ENCODE measurements at regions of chr17 and their contacts with region 1.

Region 1: DNA sequence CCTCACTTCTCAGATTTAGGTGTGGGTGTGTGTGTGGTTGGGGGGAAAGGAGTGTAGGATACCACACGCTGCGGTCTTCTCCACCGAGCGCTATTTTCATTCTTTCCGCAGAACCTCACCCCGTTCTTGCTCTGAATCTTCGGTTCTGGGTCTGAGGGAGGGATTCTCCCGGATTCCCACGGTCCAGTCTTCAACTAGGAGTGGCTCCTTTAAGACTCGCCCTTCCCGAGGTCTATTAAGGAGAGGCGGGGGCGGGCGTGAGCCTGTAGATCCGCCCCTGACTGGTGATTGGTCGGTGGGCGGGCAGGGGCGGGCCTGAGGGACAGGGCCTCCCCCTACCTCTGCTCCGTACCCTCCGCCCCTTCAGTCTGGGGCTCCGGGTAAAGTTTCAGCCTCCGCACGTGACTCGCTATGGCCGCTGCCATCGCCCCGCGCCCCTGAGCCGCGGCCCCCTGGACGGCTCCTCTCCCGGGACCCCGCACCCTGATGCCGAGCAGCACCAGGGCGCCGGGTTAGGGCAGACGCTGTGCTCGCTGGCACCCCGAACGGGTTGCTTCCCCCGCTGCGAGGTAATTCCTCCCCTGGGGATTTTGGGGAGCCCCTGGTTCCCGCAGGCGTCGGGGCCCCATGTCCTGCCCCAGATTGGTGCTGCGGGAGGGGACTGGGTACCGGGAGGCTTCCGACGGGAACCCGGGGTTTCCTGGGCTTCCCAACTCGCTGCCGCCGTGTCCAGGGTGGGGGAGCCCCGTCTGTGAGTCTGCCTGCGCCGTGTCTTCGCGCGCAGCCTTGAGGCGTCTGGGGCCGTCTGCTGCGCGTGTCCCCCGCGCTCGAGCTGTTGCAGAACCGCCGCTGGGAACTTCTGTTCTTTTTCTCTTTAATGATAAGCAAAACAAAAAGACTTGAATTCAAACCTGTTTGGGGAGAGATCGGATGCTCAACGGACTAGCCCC is 9.2 kb downstream of the RARA start:
- DNase-seq: peak; percentile 100
- H3K4me3 Mint-ChIP-seq: peak overlapping the region; percentile 89
- H3K27ac Mint-ChIP-seq: peak overlapping the region; percentile 71
- H3K4me1 Mint-ChIP-seq: peaks cover 45% of the 10 kb centered on the region
- H3K27me3 Mint-ChIP-seq: no peaks in the 10 kb centered on the region
- CTCF ChIP-seq: no peak

Region 2: GRCh38 chr17:40303009-40303657 is 15.0 kb before region 1 on chr17:
- CTCF ChIA-PET with region 1: interaction called, 159 read pairs
- intact Hi-C with region 1: loop called (anchors 2 kb)
- DNase-seq: peak; percentile 94
- H3K4me3 Mint-ChIP-seq: no peak overlapping the region
- H3K27ac Mint-ChIP-seq: peak overlapping the region; percentile 26
- H3K4me1 Mint-ChIP-seq: peaks cover 34% of the 10 kb centered on the region
- H3K27me3 Mint-ChIP-seq: no peaks in the 10 kb centered on the region
- CTCF ChIP-seq: peak; percentile 99

Region 3: GRCh38 chr17:40340880-40341807 is 23.0 kb after region 1 on chr17:
- CTCF ChIA-PET with region 1: interaction called, 1,520 read pairs
- intact Hi-C with region 1: loop called (anchors 1 kb)
- DNase-seq: peak; percentile 100
- H3K4me3 Mint-ChIP-seq: peak overlapping the region; percentile 89
- H3K27ac Mint-ChIP-seq: peak overlapping the region; percentile 75
- H3K4me1 Mint-ChIP-seq: peaks cover 57% of the 10 kb centered on the region
- H3K27me3 Mint-ChIP-seq: no peaks in the 10 kb centered on the region
- CTCF ChIP-seq: peak; percentile 92

Region 4: GRCh38 chr17:41678907-41679739 is 1361.0 kb after region 1 on chr17:
- CTCF ChIA-PET with region 1: interaction called, 10 read pairs
- intact Hi-C with region 1: no loop called
- DNase-seq: peak; percentile 80
- H3K4me3 Mint-ChIP-seq: peak overlapping the region; percentile 69
- H3K27ac Mint-ChIP-seq: peak overlapping the region; percentile 96
- H3K4me1 Mint-ChIP-seq: peaks cover 62% of the 10 kb centered on the region
- H3K27me3 Mint-ChIP-seq: no peaks in the 10 kb centered on the region
- CTCF ChIP-seq: peak; percentile 14